IMR-90 (cell line): ENCODE measurements at regions of chr9 and their contacts with region 1.

Region 1: GRCh38 chr9:29844251-29844650 is 2271.0 kb upstream of the C9orf72 start:
- DNase-seq: no peak
- ATAC-seq: no peak
- H3K4me3 ChIP-seq: no peak overlapping the region
- H3K27ac ChIP-seq: no peak overlapping the region
- H3K4me1 ChIP-seq: no peaks in the 10 kb centered on the region
- H3K27me3 ChIP-seq: no peaks in the 10 kb centered on the region
- CTCF ChIP-seq: no peak
- POLR2A ChIP-seq: no peak
- RAD21 ChIP-seq: no peak

Region 2: GRCh38 chr9:29793970-29794369 is 50.3 kb before region 1 on chr9:
- CTCF ChIA-PET with region 1: no interaction called
- POLR2A ChIA-PET with region 1: no interaction called
- dilution Hi-C with region 1: no loop called
- in situ Hi-C with region 1: no loop called
- intact Hi-C with region 1: loop called (anchors 10 kb)
- DNase-seq: no peak
- ATAC-seq: no peak
- H3K4me3 ChIP-seq: no peak overlapping the region
- H3K27ac ChIP-seq: no peak overlapping the region
- H3K4me1 ChIP-seq: no peaks in the 10 kb centered on the region
- H3K27me3 ChIP-seq: no peaks in the 10 kb centered on the region
- CTCF ChIP-seq: no peak
- POLR2A ChIP-seq: no peak
- RAD21 ChIP-seq: no peak